Activated naive CD4-positive, alpha-beta T cell treated with anti-CD3 and anti-CD28 coated beads for 36 hours (primary cell): ENCODE measurements at regions of chr3 and their contacts with region 1.

Region 1: GRCh38 chr3:158644345-158644908 is at the start of gene GFM1:
- DNase-seq: peak; percentile 93
- H3K4me3 Mint-ChIP-seq: peak within 1 kb of the TSS; percentile 97
- H3K27ac Mint-ChIP-seq: peak within 1 kb of the TSS; percentile 87
- H3K4me1 Mint-ChIP-seq: peaks cover 36% of the 10 kb centered on the region
- H3K27me3 Mint-ChIP-seq: no peaks in the 10 kb centered on the region
- total RNA-seq, gene GFM1: 57.4 to 57.8 TPM

Region 2: GRCh38 chr3:157159762-157160657 is 1484.4 kb before region 1 on chr3 and contains the start of gene CCNL1:
- CTCF ChIA-PET with region 1: no interaction called
- intact Hi-C with region 1: loop called (anchors 5 kb)
- DNase-seq: peak; percentile 94
- H3K4me3 Mint-ChIP-seq: peak within 1 kb of the TSS; percentile 93
- H3K27ac Mint-ChIP-seq: peak within 1 kb of the TSS; percentile 99
- H3K4me1 Mint-ChIP-seq: peaks cover 43% of the 10 kb centered on the region
- H3K27me3 Mint-ChIP-seq: no peaks in the 10 kb centered on the region
- total RNA-seq, gene CCNL1: 206 to 214 TPM

Region 3: GRCh38 chr3:158109804-158110657 is 534.4 kb before region 1 on chr3 and contains the start of gene RSRC1:
- CTCF ChIA-PET with region 1: no interaction called
- intact Hi-C with region 1: loop called (anchors 1 kb)
- DNase-seq: peak; percentile 86
- H3K4me3 Mint-ChIP-seq: peak within 1 kb of the TSS; percentile 97
- H3K27ac Mint-ChIP-seq: peak within 1 kb of the TSS; percentile 77
- H3K4me1 Mint-ChIP-seq: peaks cover 58% of the 10 kb centered on the region
- H3K27me3 Mint-ChIP-seq: peaks cover 34% of the 10 kb centered on the region
- total RNA-seq, gene RSRC1: 48.4 to 50.1 TPM

Region 4: DNA sequence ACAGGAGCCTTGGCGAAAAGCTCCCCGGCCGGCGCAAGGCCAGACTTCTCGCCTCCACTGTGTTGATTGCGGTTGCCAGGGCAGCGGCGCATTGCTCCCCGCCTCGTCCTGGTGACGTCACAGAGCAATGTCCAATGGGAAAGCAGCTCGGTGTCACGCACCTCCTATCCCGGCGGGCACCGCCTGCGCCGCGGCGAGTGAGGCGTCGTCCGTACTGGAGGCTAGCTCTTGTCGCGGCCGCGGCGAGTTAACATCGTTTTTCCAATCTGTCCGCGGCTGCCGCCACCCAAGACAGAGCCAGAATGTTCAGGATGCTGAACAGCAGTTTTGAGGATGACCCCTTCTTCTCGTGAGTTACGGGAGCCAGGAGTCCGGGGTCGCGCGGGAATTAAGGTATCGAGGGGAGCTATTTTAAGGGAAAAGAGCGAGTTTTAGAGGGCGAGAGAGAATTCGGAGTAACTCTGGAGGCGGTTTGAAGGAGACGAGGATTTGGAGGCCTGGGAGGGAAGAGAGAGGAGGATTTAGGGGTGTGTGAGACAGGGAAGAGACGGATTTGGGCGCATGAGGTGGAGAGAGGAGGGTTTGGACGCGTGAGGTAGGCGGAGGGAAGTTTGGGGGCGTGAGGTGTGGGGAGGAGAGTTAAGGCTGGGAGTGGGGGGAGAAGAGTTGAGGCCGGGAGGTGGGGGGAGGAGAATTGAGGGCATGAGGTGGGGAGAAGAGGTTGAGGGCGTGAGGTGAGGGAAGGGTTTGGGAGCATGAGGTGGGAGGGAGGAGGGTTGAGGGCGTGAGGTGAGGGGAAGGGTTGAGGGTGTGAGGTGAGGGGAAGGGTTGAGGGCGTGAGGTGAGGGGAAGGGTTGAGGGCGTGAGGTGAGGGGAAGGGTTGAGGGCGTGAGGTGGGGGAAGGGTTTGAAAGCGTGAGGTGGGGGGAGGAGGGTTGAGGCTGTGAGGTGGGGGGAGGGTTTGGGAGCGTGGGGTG is 73.1 kb before region 1 on chr3 and contains the start of gene MLF1:
- CTCF ChIA-PET with region 1: no interaction called
- intact Hi-C with region 1: loop called (anchors 1 kb)
- DNase-seq: peak; percentile 86
- H3K4me3 Mint-ChIP-seq: peak within 1 kb of the TSS; percentile 72
- H3K27ac Mint-ChIP-seq: no peak within 1 kb of the TSS
- H3K4me1 Mint-ChIP-seq: peaks cover 11% of the 10 kb centered on the region
- H3K27me3 Mint-ChIP-seq: peaks cover 40% of the 10 kb centered on the region
- total RNA-seq, gene MLF1: 1.2 to 1.6 TPM

Region 5: GRCh38 chr3:158672293-158673176 is 28.1 kb after region 1 on chr3 and contains the start of gene LXN:
- CTCF ChIA-PET with region 1: interaction called, 13 read pairs
- intact Hi-C with region 1: loop called (anchors 1 kb)
- DNase-seq: peak; percentile 90
- H3K4me3 Mint-ChIP-seq: peak within 1 kb of the TSS; percentile 90
- H3K27ac Mint-ChIP-seq: peak within 1 kb of the TSS; percentile 88
- H3K4me1 Mint-ChIP-seq: peaks cover 17% of the 10 kb centered on the region
- H3K27me3 Mint-ChIP-seq: no peaks in the 10 kb centered on the region
- total RNA-seq, gene LXN: 3.7 to 4.0 TPM

Region 6: DNA sequence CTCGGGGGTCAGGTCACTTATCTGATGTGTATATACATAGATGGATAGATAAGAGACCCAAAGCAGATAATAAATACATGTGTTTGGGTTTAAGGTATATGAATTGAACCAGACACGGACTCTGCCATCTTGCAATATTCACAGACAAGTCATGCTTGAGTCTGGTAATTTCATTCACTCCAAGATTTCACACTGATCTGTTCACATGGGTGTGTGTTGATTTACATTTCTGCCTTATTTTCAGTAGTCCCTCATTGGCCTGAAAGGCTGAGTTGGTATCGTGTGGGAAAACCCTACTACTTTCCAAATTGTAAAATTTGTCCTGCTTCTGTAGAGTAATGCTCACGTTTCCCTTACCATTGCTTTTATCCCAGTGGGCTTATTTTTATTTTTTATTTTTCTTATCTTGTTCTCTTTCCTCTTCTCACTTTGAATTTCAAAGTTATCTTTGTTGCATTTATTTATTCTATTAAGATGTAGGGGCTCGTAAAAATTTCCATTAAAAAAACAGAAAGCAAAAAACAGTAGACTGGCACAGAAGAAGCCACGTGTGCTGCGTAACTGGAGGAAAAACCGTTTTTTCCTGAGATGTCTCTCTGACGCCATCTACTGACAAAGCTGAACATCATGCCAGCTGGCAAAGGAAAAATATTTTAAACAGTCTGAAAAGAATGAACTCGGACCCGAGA is 146.6 kb after region 1 on chr3:
- CTCF ChIA-PET with region 1: interaction called, 8 read pairs
- intact Hi-C with region 1: loop called (anchors 1 kb)
- DNase-seq: peak; percentile 48
- H3K4me3 Mint-ChIP-seq: peak overlapping the region; percentile 36
- H3K27ac Mint-ChIP-seq: no peak overlapping the region
- H3K4me1 Mint-ChIP-seq: peaks cover 5% of the 10 kb centered on the region
- H3K27me3 Mint-ChIP-seq: no peaks in the 10 kb centered on the region

Region 7: DNA sequence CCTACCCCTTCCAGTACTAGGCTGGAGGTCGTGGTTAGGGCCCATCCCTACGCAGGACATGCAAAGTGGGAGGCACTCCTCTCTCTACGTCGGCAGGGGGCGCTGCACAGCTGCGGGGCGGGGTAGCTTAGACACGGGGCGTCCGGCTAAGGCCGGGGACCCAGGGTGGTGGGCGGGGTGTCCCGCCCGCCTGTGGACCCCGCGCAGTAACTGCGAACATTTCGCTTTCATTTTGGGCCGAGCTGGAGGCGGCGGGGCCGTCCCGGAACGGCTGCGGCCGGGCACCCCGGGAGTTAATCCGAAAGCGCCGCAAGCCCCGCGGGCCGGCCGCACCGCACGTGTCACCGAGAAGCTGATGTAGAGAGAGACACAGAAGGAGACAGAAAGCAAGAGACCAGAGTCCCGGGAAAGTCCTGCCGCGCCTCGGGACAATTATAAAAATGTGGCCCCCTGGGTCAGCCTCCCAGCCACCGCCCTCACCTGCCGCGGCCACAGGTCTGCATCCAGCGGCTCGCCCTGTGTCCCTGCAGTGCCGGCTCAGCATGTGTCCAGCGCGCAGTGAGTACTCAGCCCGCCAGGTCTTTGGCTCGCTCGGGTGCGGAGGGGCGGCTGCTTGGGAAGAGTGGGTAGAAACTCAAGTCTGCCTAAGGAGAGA is 1344.3 kb after region 1 on chr3 and contains the start of gene IL12A:
- CTCF ChIA-PET with region 1: no interaction called
- intact Hi-C with region 1: loop called (anchors 10 kb)
- DNase-seq: peak; percentile 85
- H3K4me3 Mint-ChIP-seq: peak within 1 kb of the TSS; percentile 57
- H3K27ac Mint-ChIP-seq: no peak within 1 kb of the TSS
- H3K4me1 Mint-ChIP-seq: peaks cover 14% of the 10 kb centered on the region
- H3K27me3 Mint-ChIP-seq: no peaks in the 10 kb centered on the region
- total RNA-seq, gene IL12A: not detected